ENCODE measurements at regions of chr5 and their contacts with region 1.

Region 1: DNA sequence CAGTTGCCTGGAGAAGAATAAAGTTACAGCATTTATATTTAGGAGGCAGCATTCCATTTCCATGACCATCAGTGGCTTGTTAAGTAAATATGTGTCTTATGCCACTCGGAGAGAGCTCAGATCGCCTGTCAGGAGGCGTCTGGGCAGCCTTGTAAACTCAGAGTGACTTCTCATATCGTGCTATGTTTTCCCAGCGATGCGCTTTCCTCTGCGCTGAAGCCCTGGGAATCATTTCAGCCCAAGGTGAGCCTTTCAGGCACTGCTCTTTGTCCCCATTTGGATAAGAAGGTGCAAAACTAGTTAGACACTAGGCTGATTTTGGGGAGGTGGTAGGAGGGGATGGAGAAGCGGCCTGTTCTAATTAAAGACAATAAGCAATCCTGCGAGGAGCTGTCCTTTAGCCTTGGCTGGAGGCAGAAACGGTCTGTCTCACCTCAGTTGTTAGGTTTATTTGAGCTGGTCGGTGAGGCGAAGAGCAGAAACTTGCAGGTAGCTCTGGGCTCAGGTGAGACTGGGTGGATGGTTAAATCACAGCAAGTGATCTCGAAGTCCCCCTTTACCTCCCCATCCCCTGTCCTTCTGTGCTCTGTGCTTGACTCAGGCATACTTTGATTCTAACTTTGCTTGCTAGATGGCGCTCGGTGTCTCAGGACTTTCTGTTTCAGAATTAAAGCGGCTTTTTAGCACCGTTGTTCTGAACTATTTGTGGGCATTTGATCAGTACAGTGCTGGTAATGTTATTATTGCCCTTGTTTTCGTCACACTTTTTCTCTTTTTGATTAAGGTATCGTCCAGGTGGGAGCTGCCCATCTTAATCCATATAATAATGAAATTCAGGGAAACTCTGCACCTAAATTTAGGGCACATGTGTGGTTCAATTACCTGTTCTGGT is 24.6 kb downstream of the NR2F1 start:
- DNase-seq: peak; percentile 37 to 42
- H3K4me3 ChIP-seq: no peak overlapping the region
- H3K27ac ChIP-seq: no peak overlapping the region
- H3K4me1 ChIP-seq: peaks cover 0 to 25% of the 10 kb centered on the region in 2 donors
- H3K27me3 ChIP-seq: peaks cover 61% of the 10 kb centered on the region
- CTCF ChIP-seq: peak in 3 of 6 experiments; percentile 33 to 53 (median 45)
- POLR2A ChIP-seq: no peak

Region 2: DNA sequence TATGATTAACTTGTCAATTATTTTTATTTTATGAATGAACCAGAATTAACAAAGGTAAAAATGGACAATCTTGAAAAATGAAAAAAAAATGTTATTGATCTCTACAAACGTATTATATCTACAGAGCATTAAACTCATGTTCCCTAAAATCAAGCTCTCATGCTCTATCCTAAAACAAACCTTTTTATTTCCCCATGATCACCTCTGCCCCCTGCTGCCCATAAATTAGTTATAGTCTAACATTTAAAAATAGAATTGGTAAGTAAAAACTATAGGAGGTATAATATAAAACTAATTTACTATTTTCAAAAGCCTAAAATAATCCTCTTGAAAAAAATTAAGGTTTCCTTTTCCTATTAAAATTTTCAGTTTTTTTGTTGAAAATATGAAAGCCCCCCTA is 301.7 kb after region 1 on chr5:
- intact Hi-C with region 1: loop called (anchors 10 kb)
- DNase-seq: no peak
- H3K4me3 ChIP-seq: no peak overlapping the region
- H3K27ac ChIP-seq: no peak overlapping the region
- H3K4me1 ChIP-seq: no peaks in the 10 kb centered on the region
- H3K27me3 ChIP-seq: no peaks in the 10 kb centered on the region
- CTCF ChIP-seq: peak in 2 of 6 experiments; percentile 11 to 14
- POLR2A ChIP-seq: no peak

Measured in thyroid gland (tissue), 4 donors.